PC-9 (cell line): ENCODE measurements at regions of chr9 and their contacts with region 1.

Region 1: DNA sequence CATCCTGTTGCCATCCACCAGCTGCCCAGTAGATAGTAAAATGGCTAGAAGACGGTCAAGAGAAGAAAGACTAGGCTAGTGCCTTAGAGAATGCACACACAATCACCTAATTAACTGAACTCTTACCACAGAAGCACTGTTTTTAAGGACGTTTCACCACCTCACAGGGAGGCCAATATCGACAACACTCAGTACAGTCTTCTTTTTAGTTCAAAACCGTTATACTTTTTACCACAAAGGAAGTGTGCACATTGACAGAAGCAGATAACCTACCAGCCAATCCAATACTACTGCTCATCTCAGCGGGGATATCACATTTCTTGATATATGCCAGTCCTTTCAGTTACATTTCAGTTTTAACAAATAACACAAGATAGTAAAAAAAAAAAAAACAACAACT is 122.3 kb downstream of the GNAQ start:
- DNase-seq: no peak
- H3K4me3 ChIP-seq: no peak overlapping the region
- H3K27ac ChIP-seq: no peak overlapping the region
- H3K4me1 ChIP-seq: peaks cover 31% of the 10 kb centered on the region
- H3K27me3 ChIP-seq: no peaks in the 10 kb centered on the region
- CTCF ChIP-seq: no peak

Region 2: GRCh38 chr9:77632652-77633051 is 276.7 kb before region 1 on chr9:
- CTCF ChIA-PET with region 1: no interaction called
- POLR2A ChIA-PET with region 1: no interaction called
- intact Hi-C with region 1: no loop called
- DNase-seq: no peak
- H3K4me3 ChIP-seq: no peak overlapping the region
- H3K27ac ChIP-seq: no peak overlapping the region
- H3K4me1 ChIP-seq: no peaks in the 10 kb centered on the region
- H3K27me3 ChIP-seq: no peaks in the 10 kb centered on the region
- CTCF ChIP-seq: no peak

Region 3: GRCh38 chr9:77926309-77926959 is 17.1 kb after region 1 on chr9:
- CTCF ChIA-PET with region 1: no interaction called
- POLR2A ChIA-PET with region 1: interaction called, 4 read pairs
- intact Hi-C with region 1: loop called (anchors 2 kb)
- DNase-seq: peak in 1 of 2 experiments; percentile 76
- H3K4me3 ChIP-seq: no peak overlapping the region
- H3K27ac ChIP-seq: peak overlapping the region; percentile 48
- H3K4me1 ChIP-seq: peaks cover 20% of the 10 kb centered on the region
- H3K27me3 ChIP-seq: no peaks in the 10 kb centered on the region
- CTCF ChIP-seq: no peak

Region 4: GRCh38 chr9:77977210-77977611 is 67.9 kb after region 1 on chr9:
- CTCF ChIA-PET with region 1: no interaction called
- POLR2A ChIA-PET with region 1: no interaction called
- intact Hi-C with region 1: loop called (anchors 5 kb)
- DNase-seq: peak; percentile 39 to 43
- H3K4me3 ChIP-seq: no peak overlapping the region
- H3K27ac ChIP-seq: no peak overlapping the region
- H3K4me1 ChIP-seq: peaks cover 25% of the 10 kb centered on the region
- H3K27me3 ChIP-seq: no peaks in the 10 kb centered on the region
- CTCF ChIP-seq: peak; percentile 36; the same call in 1 of the 2 replicates

Region 5: GRCh38 chr9:78221425-78221824 is 312.1 kb after region 1 on chr9:
- CTCF ChIA-PET with region 1: no interaction called
- POLR2A ChIA-PET with region 1: no interaction called
- intact Hi-C with region 1: no loop called
- DNase-seq: no peak
- H3K4me3 ChIP-seq: no peak overlapping the region
- H3K27ac ChIP-seq: no peak overlapping the region
- H3K4me1 ChIP-seq: no peaks in the 10 kb centered on the region
- H3K27me3 ChIP-seq: no peaks in the 10 kb centered on the region
- CTCF ChIP-seq: no peak